Aorta (tissue), 5 donors: ENCODE measurements at regions of chr6 and their contacts with region 1.

Region 1: GRCh38 chr6:72622094-72622940 is 453 bp downstream of the KCNQ5 start:
- DNase-seq: peak; percentile 60 to 86
- ATAC-seq: peak; percentile 55
- H3K4me3 ChIP-seq: peak overlapping the region; percentile 59 to 60
- H3K27ac ChIP-seq: no peak overlapping the region
- H3K4me1 ChIP-seq: no peaks in the 10 kb centered on the region
- H3K27me3 ChIP-seq: no peaks in the 10 kb centered on the region

Region 2: GRCh38 chr6:72748759-72749158 is 126.4 kb after region 1 on chr6:
- intact Hi-C with region 1: loop called in 1 of 2 experiments (anchors 5 kb)
- DNase-seq: no peak
- ATAC-seq: peak; percentile 29
- H3K4me3 ChIP-seq: no peak overlapping the region
- H3K27ac ChIP-seq: no peak overlapping the region
- H3K4me1 ChIP-seq: peaks cover 2 to 8% of the 10 kb centered on the region in 2 donors
- H3K27me3 ChIP-seq: no peaks in the 10 kb centered on the region

Region 3: GRCh38 chr6:72861935-72862432 is 239.7 kb after region 1 on chr6:
- intact Hi-C with region 1: loop called in 1 of 2 experiments (anchors 10 kb)
- DNase-seq: peak in 1 of 2 donors; percentile 75
- ATAC-seq: peak; percentile 87
- H3K4me3 ChIP-seq: no peak overlapping the region
- H3K27ac ChIP-seq: peak overlapping the region; percentile 23 to 78
- H3K4me1 ChIP-seq: peaks cover 6 to 8% of the 10 kb centered on the region in 2 donors
- H3K27me3 ChIP-seq: no peaks in the 10 kb centered on the region

Region 4: GRCh38 chr6:73041051-73041450 is 418.7 kb after region 1 on chr6:
- intact Hi-C with region 1: loop called in 1 of 2 experiments (anchors 10 kb)
- DNase-seq: no peak
- ATAC-seq: no peak
- H3K4me3 ChIP-seq: peak overlapping the region; percentile 42 to 69
- H3K27ac ChIP-seq: no peak overlapping the region
- H3K4me1 ChIP-seq: peaks cover 0 to 7% of the 10 kb centered on the region in 2 donors
- H3K27me3 ChIP-seq: no peaks in the 10 kb centered on the region

Region 5: GRCh38 chr6:73180763-73181619 is 558.7 kb after region 1 on chr6:
- intact Hi-C with region 1: loop called in 1 of 2 experiments (anchors 5 kb)
- DNase-seq: no peak
- ATAC-seq: peak; percentile 81
- H3K4me3 ChIP-seq: peak overlapping the region in 1 of 2 donors; percentile 52
- H3K27ac ChIP-seq: no peak overlapping the region
- H3K4me1 ChIP-seq: no peaks in the 10 kb centered on the region
- H3K27me3 ChIP-seq: no peaks in the 10 kb centered on the region